Calu3 (cell line): ENCODE measurements at regions of chr7 and their contacts with region 1.

Region 1: DNA sequence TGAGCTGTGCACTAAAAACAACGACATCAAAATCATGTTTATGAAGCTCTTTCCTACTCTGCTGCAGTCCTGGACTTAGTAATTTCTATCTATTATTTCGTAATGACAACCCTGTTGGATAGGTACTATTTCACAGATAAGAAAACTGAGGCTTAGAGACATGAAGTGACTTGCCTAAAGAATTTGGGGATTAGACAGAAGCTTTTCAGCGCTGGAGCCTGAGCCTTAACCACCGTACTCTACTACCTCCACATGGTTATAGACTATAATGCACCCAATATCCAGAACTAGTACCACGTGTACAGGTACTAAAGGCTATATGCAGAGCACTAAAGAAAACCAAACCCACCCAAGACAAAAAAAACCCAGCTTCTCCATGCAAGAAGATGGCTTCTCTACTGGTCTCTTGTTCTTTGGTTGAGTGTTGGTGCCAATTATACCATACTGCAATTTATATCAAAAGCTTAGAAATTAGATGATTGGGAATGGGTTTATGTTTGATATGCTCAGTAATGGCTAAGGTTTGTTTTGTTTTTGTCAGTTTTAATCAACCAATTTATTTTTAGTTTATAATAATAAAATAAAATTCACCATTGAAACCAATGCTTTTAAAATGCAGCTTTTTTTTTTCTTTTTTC is 6.5 kb upstream of the SNX10 start:
- DNase-seq: peak; percentile 18
- H3K4me3 Mint-ChIP-seq: no peak overlapping the region
- H3K27ac Mint-ChIP-seq: no peak overlapping the region
- H3K4me1 Mint-ChIP-seq: no peaks in the 10 kb centered on the region
- H3K27me3 Mint-ChIP-seq: no peaks in the 10 kb centered on the region
- CTCF ChIP-seq: no peak

Region 2: GRCh38 chr7:26090927-26091519 is 194.1 kb before region 1 on chr7:
- CTCF ChIA-PET with region 1: no interaction called
- intact Hi-C with region 1: loop called (anchors 1 kb)
- DNase-seq: peak; percentile 27
- H3K4me3 Mint-ChIP-seq: no peak overlapping the region
- H3K27ac Mint-ChIP-seq: no peak overlapping the region
- H3K4me1 Mint-ChIP-seq: peaks cover 23% of the 10 kb centered on the region
- H3K27me3 Mint-ChIP-seq: no peaks in the 10 kb centered on the region
- CTCF ChIP-seq: peak; percentile 87

Region 3: GRCh38 chr7:26538689-26539088 is 253.6 kb after region 1 on chr7:
- CTCF ChIA-PET with region 1: no interaction called
- intact Hi-C with region 1: no loop called
- DNase-seq: no peak
- H3K4me3 Mint-ChIP-seq: no peak overlapping the region
- H3K27ac Mint-ChIP-seq: no peak overlapping the region
- H3K4me1 Mint-ChIP-seq: peaks cover 13% of the 10 kb centered on the region
- H3K27me3 Mint-ChIP-seq: no peaks in the 10 kb centered on the region
- CTCF ChIP-seq: no peak

Region 4: DNA sequence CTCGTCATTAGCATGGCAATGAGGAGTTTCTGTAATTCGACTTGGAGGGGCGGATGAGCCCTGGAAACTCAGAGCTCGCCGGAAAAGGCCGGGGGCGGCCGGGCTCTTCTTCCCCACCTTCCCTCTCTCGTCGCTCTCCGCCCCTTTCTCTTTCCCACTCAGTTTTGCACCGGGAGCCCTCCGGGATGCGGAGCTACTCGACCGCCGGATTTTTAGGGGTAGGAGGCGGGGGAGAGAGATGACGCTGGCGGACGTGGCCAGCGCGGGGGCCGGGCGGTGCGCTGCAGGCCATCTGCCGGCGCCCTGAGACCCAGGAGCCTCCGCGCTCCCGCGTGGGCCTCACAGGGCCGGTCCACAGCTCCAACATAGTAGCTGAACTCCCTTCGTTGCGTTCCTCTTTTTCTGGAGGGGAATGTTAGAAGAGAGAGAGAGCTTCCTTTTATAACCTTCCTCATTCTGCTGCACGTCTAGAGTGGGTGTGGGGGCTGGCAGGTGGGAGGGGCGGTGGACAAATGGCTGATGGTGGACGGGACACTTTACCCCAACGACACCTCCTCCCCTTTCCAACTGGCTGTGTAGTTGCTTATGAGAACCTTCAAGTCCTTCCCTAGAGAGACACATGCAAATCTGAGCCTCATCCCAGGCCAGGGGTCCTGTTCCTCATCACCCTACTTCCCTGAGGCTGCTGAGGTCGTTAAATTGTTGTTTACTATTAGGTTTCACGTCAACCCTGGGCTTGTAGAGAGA is 811.8 kb after region 1 on chr7:
- CTCF ChIA-PET with region 1: no interaction called
- intact Hi-C with region 1: no loop called
- DNase-seq: no peak
- H3K4me3 Mint-ChIP-seq: peak overlapping the region; percentile 70
- H3K27ac Mint-ChIP-seq: no peak overlapping the region
- H3K4me1 Mint-ChIP-seq: peaks cover 39% of the 10 kb centered on the region
- H3K27me3 Mint-ChIP-seq: no peaks in the 10 kb centered on the region
- CTCF ChIP-seq: no peak